ENCODE measurements at regions of chr22 and their contacts with region 1.

Region 1: GRCh38 chr22:41403532-41404318 is 22.0 kb downstream of the TEF start:
- DNase-seq: peak; percentile 91
- ATAC-seq: peak; percentile 96
- H3K4me3 Mint-ChIP-seq: no peak overlapping the region
- H3K27ac Mint-ChIP-seq: no peak overlapping the region
- H3K4me1 Mint-ChIP-seq: peaks cover 19% of the 10 kb centered on the region
- H3K27me3 Mint-ChIP-seq: no peaks in the 10 kb centered on the region
- CTCF ChIP-seq: peak; percentile 91

Region 2: DNA sequence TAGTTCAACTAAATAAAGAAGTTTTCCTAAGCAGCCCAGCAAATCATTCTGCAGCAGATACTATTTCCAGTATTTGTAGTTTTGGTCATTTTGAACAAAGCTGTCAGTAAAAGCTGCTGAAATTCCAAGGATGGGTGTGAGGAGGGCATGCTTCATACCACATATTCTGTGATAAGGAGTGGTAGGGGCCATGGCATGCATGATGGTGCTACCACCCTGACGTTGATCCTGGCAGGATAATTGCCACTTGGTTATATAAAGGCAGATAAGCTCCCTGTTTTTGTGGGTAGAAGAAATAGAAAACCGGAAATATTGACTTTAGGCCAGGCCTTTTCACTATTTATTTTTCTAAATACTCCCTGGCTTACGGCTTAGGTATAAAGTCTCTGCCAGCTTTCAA is 231.7 kb before region 1 on chr22:
- CTCF ChIA-PET with region 1: no interaction called
- POLR2A ChIA-PET with region 1: no interaction called
- intact Hi-C with region 1: no loop called
- DNase-seq: no peak
- ATAC-seq: no peak
- H3K4me3 Mint-ChIP-seq: no peak overlapping the region
- H3K27ac Mint-ChIP-seq: peak overlapping the region; percentile 65
- H3K4me1 Mint-ChIP-seq: peaks cover 3% of the 10 kb centered on the region
- H3K27me3 Mint-ChIP-seq: no peaks in the 10 kb centered on the region
- CTCF ChIP-seq: no peak

Region 3: DNA sequence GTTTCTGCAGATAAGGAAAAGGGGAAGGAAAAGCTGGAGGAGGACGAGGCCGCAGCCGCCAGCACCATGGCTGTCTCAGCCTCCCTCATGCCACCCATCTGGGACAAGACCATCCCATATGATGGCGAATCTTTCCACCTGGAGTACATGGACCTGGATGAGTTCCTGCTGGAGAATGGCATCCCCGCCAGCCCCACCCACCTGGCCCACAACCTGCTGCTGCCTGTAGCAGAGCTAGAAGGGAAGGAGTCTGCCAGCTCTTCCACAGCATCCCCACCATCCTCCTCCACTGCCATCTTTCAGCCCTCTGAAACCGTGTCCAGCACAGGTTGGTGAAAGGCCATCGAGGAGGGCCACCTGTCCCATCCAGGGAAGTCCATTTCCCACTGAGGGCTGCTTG is 16.4 kb before region 1 on chr22:
- CTCF ChIA-PET with region 1: interaction called, 23 read pairs
- POLR2A ChIA-PET with region 1: no interaction called
- intact Hi-C with region 1: no loop called
- DNase-seq: no peak
- ATAC-seq: no peak
- H3K4me3 Mint-ChIP-seq: no peak overlapping the region
- H3K27ac Mint-ChIP-seq: no peak overlapping the region
- H3K4me1 Mint-ChIP-seq: peaks cover 8% of the 10 kb centered on the region
- H3K27me3 Mint-ChIP-seq: no peaks in the 10 kb centered on the region
- CTCF ChIP-seq: no peak

Region 4: GRCh38 chr22:41448189-41448808 is 44.6 kb after region 1 on chr22:
- CTCF ChIA-PET with region 1: interaction called, 17 read pairs
- POLR2A ChIA-PET with region 1: interaction called, 15 read pairs
- intact Hi-C with region 1: no loop called
- DNase-seq: peak; percentile 95
- ATAC-seq: peak; percentile 67
- H3K4me3 Mint-ChIP-seq: peak overlapping the region; percentile 90
- H3K27ac Mint-ChIP-seq: peak overlapping the region; percentile 99
- H3K4me1 Mint-ChIP-seq: peaks cover 10% of the 10 kb centered on the region
- H3K27me3 Mint-ChIP-seq: no peaks in the 10 kb centered on the region
- CTCF ChIP-seq: no peak

Region 5: GRCh38 chr22:41479671-41480396 is 76.1 kb after region 1 on chr22:
- CTCF ChIA-PET with region 1: interaction called, 20 read pairs
- POLR2A ChIA-PET with region 1: interaction called, 3 read pairs
- intact Hi-C with region 1: no loop called
- DNase-seq: no peak
- ATAC-seq: no peak
- H3K4me3 Mint-ChIP-seq: no peak overlapping the region
- H3K27ac Mint-ChIP-seq: peak overlapping the region; percentile 25
- H3K4me1 Mint-ChIP-seq: peaks cover 39% of the 10 kb centered on the region
- H3K27me3 Mint-ChIP-seq: no peaks in the 10 kb centered on the region
- CTCF ChIP-seq: no peak

Region 6: GRCh38 chr22:41517172-41518047 is 113.7 kb after region 1 on chr22:
- CTCF ChIA-PET with region 1: interaction called, 106 read pairs
- POLR2A ChIA-PET with region 1: interaction called, 7 read pairs
- intact Hi-C with region 1: no loop called
- DNase-seq: peak; percentile 55
- ATAC-seq: peak; percentile 81
- H3K4me3 Mint-ChIP-seq: no peak overlapping the region
- H3K27ac Mint-ChIP-seq: peak overlapping the region; percentile 55
- H3K4me1 Mint-ChIP-seq: peaks cover 7% of the 10 kb centered on the region
- H3K27me3 Mint-ChIP-seq: no peaks in the 10 kb centered on the region
- CTCF ChIP-seq: peak; percentile 71

Region 7: DNA sequence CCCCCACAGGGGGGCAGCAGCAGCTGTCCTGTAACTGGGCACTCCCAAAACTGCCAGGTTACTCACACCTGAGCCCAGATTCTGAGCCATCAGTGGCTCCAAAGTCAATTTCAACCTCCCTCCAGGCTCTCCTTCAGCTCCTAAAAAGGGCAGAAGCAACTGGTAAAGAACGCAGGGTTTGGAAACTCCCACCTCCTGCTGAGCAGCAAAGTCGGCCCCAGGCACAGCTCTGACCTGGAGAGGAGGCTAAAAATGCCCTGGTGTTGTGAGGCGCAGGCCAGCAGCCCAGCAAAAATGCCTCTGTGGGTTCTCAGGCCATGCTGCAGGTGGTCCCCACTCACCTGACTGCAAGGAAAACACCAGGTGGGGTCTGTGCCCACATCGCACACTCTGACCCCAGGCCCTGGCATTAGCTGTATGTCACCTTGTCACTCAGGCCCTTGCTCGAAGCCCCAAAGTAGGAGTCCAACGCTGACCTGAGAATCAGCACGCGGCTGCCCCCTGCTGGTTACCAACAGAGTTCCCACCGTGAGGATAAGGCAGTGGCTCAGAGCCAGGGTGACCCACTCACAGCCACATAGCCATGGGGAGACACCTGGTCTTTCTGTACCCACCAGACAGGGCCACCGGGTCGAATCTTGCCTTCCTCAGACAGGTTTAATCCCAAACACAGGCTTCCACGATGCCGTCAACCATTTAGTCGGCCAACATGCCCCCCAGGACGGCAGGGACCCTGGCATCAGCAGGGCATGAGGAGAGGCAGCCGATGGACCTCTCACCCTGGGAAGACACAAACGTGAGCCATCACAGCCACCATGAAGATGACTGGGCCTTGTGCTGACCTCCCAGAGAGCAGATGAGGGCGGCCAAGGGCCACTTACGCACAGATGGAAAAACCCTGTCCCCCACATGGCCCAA is 129.4 kb after region 1 on chr22:
- CTCF ChIA-PET with region 1: interaction called, 106 read pairs
- POLR2A ChIA-PET with region 1: no interaction called
- intact Hi-C with region 1: loop called (anchors 5 kb)
- DNase-seq: peak; percentile 84
- ATAC-seq: peak; percentile 92
- H3K4me3 Mint-ChIP-seq: no peak overlapping the region
- H3K27ac Mint-ChIP-seq: peak overlapping the region; percentile 25
- H3K4me1 Mint-ChIP-seq: peaks cover 3% of the 10 kb centered on the region
- H3K27me3 Mint-ChIP-seq: no peaks in the 10 kb centered on the region
- CTCF ChIP-seq: peak; percentile 80

Region 8: DNA sequence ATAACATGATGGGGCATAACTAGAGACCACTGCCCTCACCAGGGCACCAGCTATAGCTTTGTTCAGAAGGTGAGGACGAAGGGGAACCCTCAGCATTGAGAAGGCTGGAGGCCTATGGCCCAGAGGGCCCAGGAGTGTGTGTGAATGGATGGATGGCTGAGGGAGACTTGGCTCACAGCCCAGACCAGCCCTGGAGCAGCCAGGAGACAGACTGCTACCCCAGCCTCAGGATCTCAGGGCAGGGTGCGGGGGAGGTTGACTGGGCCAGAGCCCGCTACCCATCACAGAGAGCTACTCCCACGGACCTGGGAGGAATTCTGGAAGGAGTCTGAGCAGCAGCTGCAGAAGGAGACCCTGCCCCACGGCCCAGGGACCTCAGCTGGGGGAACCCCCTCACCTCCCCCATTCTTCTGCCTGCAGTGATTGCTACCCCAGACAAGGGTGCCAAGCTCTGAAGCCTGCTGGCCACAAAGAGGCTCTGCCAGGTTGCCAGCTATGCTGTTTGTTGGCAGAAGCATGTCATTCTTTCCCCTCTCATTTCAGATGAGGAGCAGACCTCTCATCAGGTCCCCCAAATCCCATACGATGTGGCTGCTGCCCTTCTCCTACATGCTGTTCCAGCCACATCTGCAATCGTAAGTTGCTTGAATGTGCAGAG is 151.7 kb after region 1 on chr22:
- CTCF ChIA-PET with region 1: no interaction called
- POLR2A ChIA-PET with region 1: no interaction called
- intact Hi-C with region 1: no loop called
- DNase-seq: no peak
- ATAC-seq: no peak
- H3K4me3 Mint-ChIP-seq: no peak overlapping the region
- H3K27ac Mint-ChIP-seq: no peak overlapping the region
- H3K4me1 Mint-ChIP-seq: peaks cover 7% of the 10 kb centered on the region
- H3K27me3 Mint-ChIP-seq: peaks cover 13% of the 10 kb centered on the region
- CTCF ChIP-seq: no peak

Region 9: GRCh38 chr22:41899992-41900651 is 496.4 kb after region 1 on chr22:
- CTCF ChIA-PET with region 1: no interaction called
- POLR2A ChIA-PET with region 1: no interaction called
- intact Hi-C with region 1: no loop called
- DNase-seq: no peak
- ATAC-seq: no peak
- H3K4me3 Mint-ChIP-seq: no peak overlapping the region
- H3K27ac Mint-ChIP-seq: no peak overlapping the region
- H3K4me1 Mint-ChIP-seq: no peaks in the 10 kb centered on the region
- H3K27me3 Mint-ChIP-seq: no peaks in the 10 kb centered on the region
- CTCF ChIP-seq: no peak

Measured in activated CD8-positive, alpha-beta T cell treated with anti-CD3 and anti-CD28 coated beads for 36 hours (primary cell).